Activated T-helper 2 cell treated with anti-CD3 and anti-CD28 coated beads, Interferon-gamma antibody, Interleukin-2, Interleukin-4, amounts not matched to agents 10 μg/mL and 5 μg/mL and 100 μg/mL, durations not matched to agents 14 hours and 24 hours and 36 hours (primary cell): ENCODE measurements at regions of chr3 and their contacts with region 1.

Region 1: GRCh38 chr3:71583566-71584449 is at the start of gene FOXP1:
- DNase-seq: peak; percentile 57
- H3K4me3 Mint-ChIP-seq: peak within 1 kb of the TSS; percentile 91
- H3K27ac Mint-ChIP-seq: peak within 1 kb of the TSS; percentile 95
- H3K4me1 Mint-ChIP-seq: peaks cover 52% of the 10 kb centered on the region
- H3K27me3 Mint-ChIP-seq: no peaks in the 10 kb centered on the region
- total RNA-seq, gene FOXP1: 132 and 138 TPM in 2 replicates

Region 2: GRCh38 chr3:70550723-70551319 is 1033.0 kb before region 1 on chr3:
- intact Hi-C with region 1: loop called (anchors 1 kb)
- DNase-seq: peak; percentile 44
- H3K4me3 Mint-ChIP-seq: no peak overlapping the region
- H3K27ac Mint-ChIP-seq: no peak overlapping the region
- H3K4me1 Mint-ChIP-seq: no peaks in the 10 kb centered on the region
- H3K27me3 Mint-ChIP-seq: peaks cover 22% of the 10 kb centered on the region

Region 3: GRCh38 chr3:71087143-71088018 is 496.4 kb before region 1 on chr3:
- intact Hi-C with region 1: loop called (anchors 5 kb)
- DNase-seq: peak; percentile 31
- H3K4me3 Mint-ChIP-seq: peak overlapping the region; percentile 4
- H3K27ac Mint-ChIP-seq: peak overlapping the region; percentile 80
- H3K4me1 Mint-ChIP-seq: peaks cover 74% of the 10 kb centered on the region
- H3K27me3 Mint-ChIP-seq: no peaks in the 10 kb centered on the region

Region 4: GRCh38 chr3:71226565-71227269 is 357.1 kb before region 1 on chr3:
- intact Hi-C with region 1: loop called (anchors 1 kb)
- DNase-seq: peak; percentile 86
- H3K4me3 Mint-ChIP-seq: peak overlapping the region; percentile 88
- H3K27ac Mint-ChIP-seq: peak overlapping the region; percentile 97
- H3K4me1 Mint-ChIP-seq: peaks cover 63% of the 10 kb centered on the region
- H3K27me3 Mint-ChIP-seq: peaks cover 1% of the 10 kb centered on the region

Region 5: DNA sequence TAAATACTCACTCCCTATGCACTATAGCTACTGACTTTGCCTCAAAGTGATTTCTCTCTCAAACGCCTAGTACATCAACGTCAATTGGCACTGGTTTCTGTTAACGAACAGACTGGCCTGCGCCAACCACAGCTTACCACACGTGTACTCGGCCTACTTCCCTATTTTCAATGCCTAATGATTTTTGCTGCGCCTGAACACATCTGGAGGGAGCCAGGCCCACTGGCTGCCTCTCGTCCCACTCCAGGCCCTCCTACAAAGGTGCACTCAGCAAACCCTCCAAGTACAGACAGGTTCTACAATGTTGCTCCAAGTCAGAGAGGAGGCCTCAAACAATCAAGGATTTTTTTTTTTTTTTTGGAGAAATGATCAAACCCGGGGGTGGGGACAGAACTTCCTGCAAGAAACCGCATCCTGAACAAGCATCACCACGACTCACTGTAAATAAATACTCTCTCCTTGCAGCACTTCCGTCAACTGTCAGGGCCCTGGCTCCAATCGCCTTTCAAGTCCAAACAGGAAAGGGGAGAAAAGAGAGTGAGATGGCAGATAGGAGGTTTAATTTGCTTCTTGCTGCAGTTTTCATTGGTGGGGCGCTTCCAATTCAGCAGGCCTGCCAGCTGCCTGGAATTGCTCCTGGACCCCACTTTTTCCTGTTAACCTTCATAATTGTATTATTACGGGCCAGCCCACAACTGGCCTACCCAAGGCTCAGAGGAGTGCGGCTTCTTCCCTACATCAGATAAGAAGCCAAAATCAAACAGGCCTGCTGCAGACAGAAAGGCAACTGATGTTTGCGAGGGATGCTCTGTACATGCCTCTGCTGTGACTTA is 139.6 kb before region 1 on chr3:
- intact Hi-C with region 1: loop called (anchors 2 kb)
- DNase-seq: peak; percentile 79
- H3K4me3 Mint-ChIP-seq: peak overlapping the region; percentile 71
- H3K27ac Mint-ChIP-seq: peak overlapping the region; percentile 99
- H3K4me1 Mint-ChIP-seq: peaks cover 86% of the 10 kb centered on the region
- H3K27me3 Mint-ChIP-seq: no peaks in the 10 kb centered on the region

Region 6: DNA sequence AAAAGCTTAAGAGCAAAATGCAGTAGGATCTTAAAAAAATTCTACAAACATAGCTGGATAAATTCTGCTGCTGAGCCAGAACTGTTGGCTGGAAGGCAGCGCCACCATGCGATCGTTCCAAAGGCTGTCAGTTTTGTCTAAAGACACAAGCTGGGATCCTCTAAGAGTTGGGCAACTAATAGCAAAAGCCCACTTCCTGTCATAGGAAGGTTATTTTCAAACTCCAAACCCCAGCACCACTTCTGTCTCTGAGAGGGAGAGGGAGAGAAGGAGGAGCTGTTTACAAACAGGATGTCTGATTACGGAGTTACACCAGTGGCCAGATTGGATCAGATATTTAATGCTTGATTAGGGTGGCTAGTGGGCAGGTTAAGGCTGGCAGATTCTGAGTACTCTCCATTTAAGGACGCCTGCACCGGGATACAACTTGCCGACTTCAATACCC is 97.4 kb after region 1 on chr3:
- intact Hi-C with region 1: loop called (anchors 5 kb)
- DNase-seq: no peak
- H3K4me3 Mint-ChIP-seq: no peak overlapping the region
- H3K27ac Mint-ChIP-seq: no peak overlapping the region
- H3K4me1 Mint-ChIP-seq: peaks cover 13% of the 10 kb centered on the region
- H3K27me3 Mint-ChIP-seq: no peaks in the 10 kb centered on the region

Region 7: GRCh38 chr3:71694358-71694999 is 110.7 kb after region 1 on chr3:
- intact Hi-C with region 1: no loop called
- DNase-seq: no peak
- H3K4me3 Mint-ChIP-seq: no peak overlapping the region
- H3K27ac Mint-ChIP-seq: no peak overlapping the region
- H3K4me1 Mint-ChIP-seq: peaks cover 2% of the 10 kb centered on the region
- H3K27me3 Mint-ChIP-seq: no peaks in the 10 kb centered on the region